WTC11 (cell line): ENCODE measurements at regions of chr3 and their contacts with region 1.

Region 1: GRCh38 chr3:149808209-149808829 is 4.7 kb upstream of the RNF13 start:
- DNase-seq: peak; percentile 57
- ATAC-seq: peak; percentile 6; the same call in 1 of the 2 replicates
- H3K4me3 Mint-ChIP-seq: no peak overlapping the region
- H3K27ac Mint-ChIP-seq: no peak overlapping the region
- H3K4me1 Mint-ChIP-seq: peaks cover 7% of the 10 kb centered on the region
- H3K27me3 Mint-ChIP-seq: peaks cover 4% of the 10 kb centered on the region; the same call in 1 of the 2 replicates
- CTCF ChIP-seq: peak; percentile 56; the same call in 1 of the 2 replicates

Region 2: GRCh38 chr3:149512209-149512782 is 296.0 kb before region 1 on chr3:
- CTCF ChIA-PET with region 1: interaction called, 16 read pairs
- POLR2A ChIA-PET with region 1: no interaction called
- DNase-seq: peak; percentile 77
- ATAC-seq: peak; percentile 98
- H3K4me3 Mint-ChIP-seq: peak overlapping the region; percentile 47
- H3K27ac Mint-ChIP-seq: no peak overlapping the region
- H3K4me1 Mint-ChIP-seq: no peaks in the 10 kb centered on the region; the same call in 1 of the 2 replicates
- H3K27me3 Mint-ChIP-seq: no peaks in the 10 kb centered on the region
- CTCF ChIP-seq: peak; percentile 48; the same call in 1 of the 2 replicates

Region 3: DNA sequence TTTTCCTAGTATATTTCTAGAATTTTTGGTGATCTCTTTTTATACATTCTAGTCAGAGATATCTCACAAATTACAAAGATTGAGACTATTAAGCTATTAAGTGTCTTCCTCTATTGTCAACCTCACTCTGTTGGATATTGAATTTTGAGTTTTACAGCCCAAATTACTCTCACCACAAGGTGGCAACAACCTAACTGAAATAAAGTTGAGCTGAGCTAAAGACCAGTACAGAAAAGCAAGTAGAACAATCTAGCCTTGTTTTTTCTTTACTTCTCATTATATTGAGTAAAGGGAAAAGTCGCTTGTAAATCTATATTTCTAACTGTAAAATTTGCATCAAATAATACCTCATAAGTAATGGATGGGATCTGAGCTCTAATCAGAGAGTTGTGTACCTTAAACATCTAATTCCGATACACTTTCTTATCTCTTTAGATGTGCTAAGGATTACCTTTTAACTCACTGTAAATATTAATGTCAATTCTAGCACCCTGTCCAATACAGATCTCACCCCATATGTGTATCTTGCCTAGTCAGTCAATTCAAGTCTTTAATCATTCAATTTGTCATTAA is 42.5 kb before region 1 on chr3:
- CTCF ChIA-PET with region 1: interaction called, 80 read pairs
- POLR2A ChIA-PET with region 1: no interaction called
- DNase-seq: no peak
- ATAC-seq: peak; percentile 36; the same call in 1 of the 2 replicates
- H3K4me3 Mint-ChIP-seq: no peak overlapping the region
- H3K27ac Mint-ChIP-seq: no peak overlapping the region
- H3K4me1 Mint-ChIP-seq: no peaks in the 10 kb centered on the region
- H3K27me3 Mint-ChIP-seq: no peaks in the 10 kb centered on the region; the same call in none of the 2 replicates
- CTCF ChIP-seq: no peak

Region 4: DNA sequence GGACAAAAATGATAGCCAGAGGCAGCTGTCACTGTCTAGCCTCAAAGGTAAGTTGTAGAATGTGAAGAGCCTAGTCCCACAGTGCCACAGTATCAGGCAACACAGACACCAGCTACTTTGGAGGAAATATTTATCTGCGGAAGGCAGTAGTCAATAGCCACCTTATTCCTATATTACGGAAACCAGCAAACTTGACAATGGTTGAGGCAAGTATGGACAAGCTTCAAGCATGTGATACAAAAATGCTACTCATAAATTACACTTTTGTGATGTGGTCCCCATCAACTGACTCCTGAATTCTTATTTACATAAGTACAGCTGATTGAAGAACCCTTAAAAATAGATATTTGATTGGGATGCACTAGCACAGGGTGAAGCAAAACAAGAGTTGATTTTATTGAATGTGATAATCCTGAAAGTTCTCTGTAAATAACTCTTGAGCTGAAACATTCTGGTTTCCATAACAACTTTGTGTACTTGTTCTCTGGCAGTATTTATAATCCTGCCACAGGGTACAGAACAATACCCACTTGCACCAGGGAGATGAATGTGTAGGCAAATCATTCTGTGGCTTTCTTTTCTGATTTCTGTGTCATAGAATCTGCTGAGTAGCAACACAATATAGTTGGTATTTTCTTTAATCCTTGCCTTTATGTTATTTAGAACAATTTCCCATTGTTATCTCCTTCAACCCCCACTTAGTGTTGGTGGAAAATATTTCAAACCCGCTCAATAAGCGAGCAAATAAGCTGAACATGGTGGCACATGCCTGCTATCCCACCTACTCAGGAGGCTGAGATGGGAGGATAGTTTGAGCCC is 15.7 kb before region 1 on chr3 and contains the start of gene ANKUB1:
- CTCF ChIA-PET with region 1: interaction called, 14 read pairs
- POLR2A ChIA-PET with region 1: no interaction called
- DNase-seq: no peak
- ATAC-seq: no peak
- H3K4me3 Mint-ChIP-seq: no peak within 1 kb of the TSS
- H3K27ac Mint-ChIP-seq: no peak within 1 kb of the TSS
- H3K4me1 Mint-ChIP-seq: no peaks in the 10 kb centered on the region
- H3K27me3 Mint-ChIP-seq: no peaks in the 10 kb centered on the region; the same call in none of the 2 replicates
- CTCF ChIP-seq: no peak
- total RNA-seq, gene ANKUB1: not detected in 3 replicates

Region 5: GRCh38 chr3:149832086-149832485 is 23.8 kb after region 1 on chr3:
- CTCF ChIA-PET with region 1: no interaction called
- POLR2A ChIA-PET with region 1: no interaction called
- DNase-seq: no peak
- ATAC-seq: no peak
- H3K4me3 Mint-ChIP-seq: no peak overlapping the region
- H3K27ac Mint-ChIP-seq: no peak overlapping the region
- H3K4me1 Mint-ChIP-seq: no peaks in the 10 kb centered on the region
- H3K27me3 Mint-ChIP-seq: no peaks in the 10 kb centered on the region; the same call in 1 of the 2 replicates
- CTCF ChIP-seq: no peak

Region 6: DNA sequence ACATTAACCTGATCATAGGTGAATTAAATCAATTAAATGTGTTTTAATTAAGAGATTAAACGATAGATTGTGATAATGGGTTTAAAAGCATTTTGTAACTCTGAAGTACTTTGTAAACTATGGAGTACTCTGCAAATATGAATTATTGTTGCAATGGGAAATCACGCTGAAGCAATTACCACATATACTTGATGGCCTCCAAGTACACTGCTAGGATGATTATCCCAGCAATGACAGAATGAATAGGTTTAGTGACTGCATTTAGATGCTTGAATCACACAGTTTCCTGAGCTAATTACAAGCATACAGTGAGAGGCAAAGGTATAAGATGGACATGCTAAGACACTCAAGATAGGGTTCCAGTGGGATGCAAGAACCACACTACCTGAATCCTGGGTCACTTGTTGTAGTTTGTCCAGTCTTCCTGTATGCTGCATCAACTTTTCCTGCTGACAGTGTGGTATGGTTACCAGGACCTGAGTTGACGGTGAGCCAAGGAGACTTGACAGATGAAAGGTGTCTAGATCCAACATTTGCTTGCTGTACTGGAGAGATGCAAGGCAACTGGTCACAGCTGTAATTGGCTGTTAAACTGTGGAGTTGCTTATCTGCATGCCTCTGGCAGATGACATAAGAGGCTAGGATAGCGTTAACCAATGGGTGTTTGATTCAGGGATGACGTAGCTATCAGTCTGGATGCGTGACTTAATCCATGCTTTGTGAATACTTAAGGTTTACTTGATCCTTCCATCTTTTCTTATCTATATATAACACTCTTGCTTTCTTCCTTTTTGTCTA is 42.7 kb after region 1 on chr3:
- CTCF ChIA-PET with region 1: interaction called, 10 read pairs
- POLR2A ChIA-PET with region 1: no interaction called
- DNase-seq: no peak
- ATAC-seq: no peak
- H3K4me3 Mint-ChIP-seq: no peak overlapping the region
- H3K27ac Mint-ChIP-seq: no peak overlapping the region
- H3K4me1 Mint-ChIP-seq: peaks cover 13% of the 10 kb centered on the region
- H3K27me3 Mint-ChIP-seq: no peaks in the 10 kb centered on the region
- CTCF ChIP-seq: no peak